ENCODE measurements at regions of chr11 and their contacts with region 1.

Region 1: DNA sequence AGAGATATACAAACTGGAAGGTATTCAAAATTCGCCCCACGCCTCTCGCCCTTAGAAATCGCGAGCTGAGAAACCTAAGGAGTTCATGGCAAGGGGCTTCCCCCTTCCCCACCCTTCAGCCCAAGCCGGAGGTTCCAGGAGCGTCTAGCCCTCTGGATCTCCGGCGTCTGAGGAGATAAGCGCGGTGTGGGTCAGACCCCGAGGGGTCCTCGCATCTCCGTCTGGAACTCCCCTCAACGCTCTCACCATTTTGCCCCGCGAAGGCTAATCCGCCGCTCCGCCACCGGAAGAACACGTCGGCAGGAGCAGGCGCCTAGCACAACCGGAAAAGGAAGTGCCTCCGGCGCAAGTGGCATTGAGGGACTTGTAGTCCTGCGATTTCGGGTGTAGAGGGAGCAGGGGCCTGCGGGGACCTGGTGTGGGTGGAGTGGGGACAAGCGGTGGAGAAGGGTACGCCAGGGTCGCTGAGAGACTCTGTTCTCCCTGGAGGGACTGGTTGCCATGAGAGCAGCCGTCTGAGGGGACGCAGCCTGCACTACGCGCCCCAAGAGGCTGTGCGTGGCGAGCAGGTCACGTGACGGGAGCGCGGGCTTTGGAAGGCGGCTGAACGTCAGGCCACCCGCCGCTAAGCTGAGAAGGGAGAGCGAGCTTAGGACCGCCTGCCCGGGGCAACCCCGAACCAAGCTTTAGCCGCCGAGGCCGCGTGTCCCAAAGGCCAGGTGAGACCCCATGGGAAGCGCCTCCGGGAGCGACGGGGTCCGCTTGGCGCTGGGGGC is at the starts of genes FEN1 and TMEM258:
- DNase-seq: peak; percentile 88 to 97 (median 94)

Region 2: DNA sequence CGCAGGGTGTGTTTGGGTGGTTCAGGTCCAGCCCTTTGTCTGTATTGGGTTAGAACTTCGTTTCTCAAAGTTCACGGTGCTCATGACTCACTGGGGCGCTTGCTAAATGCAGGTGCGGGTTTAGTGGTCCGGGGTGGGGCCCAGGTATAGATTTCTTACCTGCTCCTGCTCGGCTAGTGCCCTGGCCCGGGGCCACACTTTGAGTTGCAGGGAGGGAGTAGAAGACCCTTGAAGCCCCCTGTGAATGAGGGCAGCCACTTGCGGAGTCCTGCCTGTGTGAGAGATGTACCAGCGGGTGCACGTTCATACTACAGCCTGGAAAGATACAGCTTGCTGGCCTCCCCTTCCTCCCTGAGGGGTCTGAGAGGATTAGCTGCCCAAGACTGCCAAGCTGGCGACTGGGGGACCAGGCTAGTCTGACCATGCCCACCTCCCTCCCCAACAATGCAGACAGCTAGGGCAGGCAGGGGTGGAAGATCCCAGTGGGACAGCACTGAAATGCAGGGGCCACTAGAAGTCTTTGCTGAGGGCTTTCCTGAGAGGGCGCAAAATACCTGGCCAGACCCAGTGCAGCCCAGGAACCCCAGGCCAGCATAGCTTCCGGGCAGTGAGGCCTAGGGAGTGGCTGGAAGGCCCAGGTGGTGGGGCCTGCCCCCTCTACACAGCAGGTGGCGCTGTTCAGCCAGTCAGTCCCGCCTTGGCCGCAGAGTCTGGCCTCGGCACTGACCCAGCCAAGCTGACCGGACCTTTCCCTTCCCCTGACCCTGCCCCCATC is 45.1 kb before region 1 on chr11:
- intact Hi-C with region 1: loop called (anchors 1 kb)
- DNase-seq: peak; percentile 73 to 97 (median 90)

Region 3: GRCh38 chr11:61947486-61948210 is 155.2 kb after region 1 on chr11:
- intact Hi-C with region 1: loop called (anchors 10 kb)
- DNase-seq: peak; percentile 79 to 96 (median 91)

Region 4: DNA sequence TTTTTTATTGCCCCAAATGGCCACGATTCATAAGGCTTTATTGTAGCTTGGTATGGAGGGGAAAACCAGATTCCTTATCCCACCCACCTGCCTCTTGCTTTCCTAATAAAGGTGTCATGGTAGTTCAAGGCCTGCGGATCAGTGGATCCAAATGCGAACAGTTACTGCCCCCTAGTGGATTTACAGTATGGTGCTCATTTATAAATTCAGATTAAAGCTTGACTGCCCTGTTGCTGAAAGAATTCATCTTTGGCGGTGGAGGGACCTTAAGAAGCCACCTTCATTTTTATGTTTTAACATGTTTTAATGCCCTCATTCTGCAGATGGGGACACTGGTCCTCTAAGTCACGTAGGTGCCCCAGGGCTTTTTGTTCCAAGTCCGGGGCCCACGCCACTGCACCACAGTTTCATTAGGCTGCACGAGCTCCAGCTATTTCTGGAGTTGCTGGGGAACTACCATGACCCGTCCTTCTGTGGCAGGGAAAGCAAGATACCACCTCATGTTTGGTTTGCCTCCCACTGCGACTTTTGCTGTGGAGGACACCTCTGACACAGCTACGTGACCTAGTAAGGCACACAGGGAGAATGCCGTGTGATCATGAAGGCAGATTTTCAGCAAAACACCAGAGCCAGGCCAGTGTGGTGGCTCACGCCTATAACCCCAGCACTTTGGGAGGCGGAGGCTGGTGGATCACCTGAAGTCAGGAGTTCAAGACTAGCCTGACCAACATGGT is 315.7 kb after region 1 on chr11:
- intact Hi-C with region 1: loop called (anchors 5 kb)
- DNase-seq: peak in 25 of 42 donors; percentile 19 to 79 (median 52)

Measured in head of caudate nucleus (tissue), 42 donors.